OCI-LY7 (cell line): ENCODE measurements at regions of chr5 and their contacts with region 1.

Region 1: DNA sequence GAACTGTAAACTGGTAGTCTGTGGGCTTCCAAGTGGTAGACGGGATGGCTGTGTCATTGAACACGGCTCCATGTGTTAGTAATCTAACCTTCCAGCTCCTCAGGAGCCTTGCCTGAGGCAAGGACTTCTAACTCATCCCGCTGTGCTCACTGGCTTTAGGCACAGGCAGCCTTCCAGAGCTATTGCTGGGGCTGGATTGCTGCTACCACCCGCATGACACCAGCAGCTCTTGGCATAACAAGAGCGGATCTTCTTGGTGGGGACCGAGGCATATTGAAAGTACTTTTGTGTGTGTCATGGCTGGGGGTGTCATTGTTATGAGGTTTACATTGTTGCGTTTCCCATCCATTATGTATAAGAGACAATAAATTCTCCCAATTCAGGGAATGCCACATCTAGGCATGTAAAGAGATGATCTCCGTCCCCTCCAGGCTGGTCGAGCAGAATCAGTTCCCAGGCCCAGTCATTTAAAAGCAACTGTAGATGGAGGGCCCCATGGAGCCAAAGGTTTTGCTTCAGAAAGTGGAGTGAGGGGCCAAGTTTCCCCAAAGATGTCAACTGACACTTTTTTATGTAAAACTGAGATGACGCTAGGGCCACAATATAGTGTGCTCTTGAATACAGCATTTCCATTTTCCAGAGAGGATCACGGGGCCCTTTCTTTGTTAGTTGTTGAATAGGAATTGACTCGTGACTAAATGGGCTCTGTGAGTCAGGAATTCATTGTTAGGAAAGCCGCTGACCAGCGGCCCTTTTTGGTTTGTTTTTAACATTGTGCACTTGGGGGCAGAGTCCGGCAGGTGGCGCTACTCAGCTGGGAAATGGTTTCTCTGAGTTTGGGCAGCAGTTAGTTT is 759.6 kb downstream of the TAF11L14 start:
- DNase-seq: peak; percentile 31
- H3K4me3 ChIP-seq: no peak overlapping the region
- H3K27ac ChIP-seq: no peak overlapping the region
- H3K4me1 ChIP-seq: no peaks in the 10 kb centered on the region
- CTCF ChIP-seq: peak; percentile 95

Region 2: GRCh38 chr5:18699681-18700080 is 305.9 kb after region 1 on chr5:
- CTCF ChIA-PET with region 1: no interaction called
- POLR2A ChIA-PET with region 1: no interaction called
- intact Hi-C with region 1: loop called (anchors 2 kb)
- DNase-seq: no peak
- H3K4me3 ChIP-seq: no peak overlapping the region
- H3K27ac ChIP-seq: no peak overlapping the region
- H3K4me1 ChIP-seq: peaks cover 13% of the 10 kb centered on the region
- CTCF ChIP-seq: no peak

Region 3: GRCh38 chr5:19615661-19616060 is 1221.8 kb after region 1 on chr5:
- CTCF ChIA-PET with region 1: no interaction called
- POLR2A ChIA-PET with region 1: no interaction called
- intact Hi-C with region 1: loop called (anchors 10 kb)
- DNase-seq: no peak
- H3K4me3 ChIP-seq: no peak overlapping the region
- H3K27ac ChIP-seq: no peak overlapping the region
- H3K4me1 ChIP-seq: no peaks in the 10 kb centered on the region
- CTCF ChIP-seq: no peak